Right ventricle myocardium inferior (tissue), 1 donor: ENCODE measurements at regions of chr2 and their contacts with region 1.

Region 1: DNA sequence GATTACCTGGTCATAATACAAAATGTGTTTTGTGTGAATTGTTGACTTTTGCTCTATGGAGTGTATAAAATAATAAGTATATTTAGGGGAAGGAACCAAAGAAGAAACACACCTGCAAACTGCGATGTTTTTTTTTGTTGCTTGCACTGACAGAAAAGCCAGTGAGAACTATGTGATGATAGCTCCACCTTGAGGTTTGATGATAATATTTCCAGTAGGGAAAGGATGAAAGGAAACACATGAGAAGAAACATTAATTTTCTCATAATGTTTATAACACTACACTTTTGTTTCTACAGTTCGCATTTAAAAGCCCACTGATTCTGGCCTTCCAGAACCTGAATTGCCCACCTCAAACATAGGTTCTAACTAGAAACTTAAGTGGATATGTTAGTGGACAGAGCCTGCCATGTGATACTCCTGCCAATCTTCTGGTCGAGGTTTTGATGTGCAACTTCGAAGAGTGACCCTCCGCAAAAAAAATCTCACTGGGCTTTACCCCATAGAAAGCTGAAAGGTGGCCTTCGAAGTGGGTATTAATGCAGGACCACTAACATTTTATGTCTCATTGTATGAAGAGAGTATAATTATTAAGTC is 476.4 kb upstream of the SPHKAP start:
- DNase-seq: no peak
- ATAC-seq: no peak

Region 2: DNA sequence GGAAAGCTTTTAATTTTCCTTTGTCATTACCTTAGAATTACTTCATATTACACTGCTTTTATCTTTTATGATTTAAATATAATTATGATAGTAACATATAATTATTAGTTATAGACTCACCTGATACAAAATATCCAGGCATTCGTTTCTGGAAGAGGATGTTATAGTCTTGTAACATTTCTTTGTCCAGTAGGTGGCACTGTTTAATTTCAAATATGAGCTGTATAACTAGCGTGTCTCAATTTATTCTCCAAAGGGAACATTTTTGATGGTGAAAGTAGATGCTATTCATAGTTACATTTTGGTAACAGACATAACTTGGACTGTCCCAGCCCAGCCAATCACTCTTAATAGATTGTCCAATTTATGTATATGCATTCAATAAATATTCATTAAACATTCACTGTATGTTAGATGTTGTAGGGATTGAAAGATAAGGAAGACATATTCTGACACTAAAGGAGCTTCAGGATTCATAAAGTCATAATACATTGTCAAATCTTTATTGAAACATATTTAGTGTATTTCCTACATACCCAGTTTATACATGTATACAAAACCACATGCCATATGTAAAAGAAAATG is 767.3 kb before region 1 on chr2:
- intact Hi-C with region 1: loop called (anchors 5 kb)
- DNase-seq: no peak
- ATAC-seq: peak; percentile 62

Region 3: DNA sequence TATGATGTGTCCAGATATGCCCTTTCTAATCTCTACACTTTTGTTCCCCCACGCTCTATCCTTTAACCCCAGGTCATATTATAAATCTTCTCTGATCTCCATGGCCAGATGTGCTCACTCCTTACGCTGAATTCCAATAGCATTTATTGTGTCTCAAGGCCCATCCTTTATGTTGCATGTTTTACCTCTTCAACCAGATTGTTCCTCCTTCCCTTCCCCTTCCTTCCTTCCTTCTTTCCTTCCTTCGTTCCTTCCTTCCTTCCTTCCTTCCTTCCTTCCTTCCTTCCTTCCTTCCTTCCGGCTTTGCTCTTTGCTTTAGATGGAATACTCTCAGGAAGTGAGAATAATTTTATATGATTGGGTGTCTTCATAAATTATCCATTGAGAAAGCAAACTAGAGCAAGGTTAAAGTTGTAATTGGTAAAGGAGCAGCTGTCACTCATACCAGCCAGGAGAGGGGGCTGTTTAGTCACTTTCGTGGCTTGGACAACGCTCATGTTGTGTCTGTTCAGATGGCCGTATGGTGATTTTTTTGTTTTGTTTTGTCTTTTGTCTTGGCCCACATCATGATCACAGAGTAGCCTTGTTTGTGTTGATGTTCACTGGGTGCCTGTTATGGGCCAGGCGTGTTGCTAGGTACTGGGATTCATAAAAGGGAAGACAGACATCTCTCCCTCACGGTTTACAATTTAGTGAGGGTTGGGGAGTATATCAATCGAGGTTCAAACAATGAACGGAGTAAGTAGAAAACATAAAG is 718.5 kb before region 1 on chr2:
- intact Hi-C with region 1: loop called (anchors 2 kb)
- DNase-seq: no peak
- ATAC-seq: peak; percentile 67

Region 4: DNA sequence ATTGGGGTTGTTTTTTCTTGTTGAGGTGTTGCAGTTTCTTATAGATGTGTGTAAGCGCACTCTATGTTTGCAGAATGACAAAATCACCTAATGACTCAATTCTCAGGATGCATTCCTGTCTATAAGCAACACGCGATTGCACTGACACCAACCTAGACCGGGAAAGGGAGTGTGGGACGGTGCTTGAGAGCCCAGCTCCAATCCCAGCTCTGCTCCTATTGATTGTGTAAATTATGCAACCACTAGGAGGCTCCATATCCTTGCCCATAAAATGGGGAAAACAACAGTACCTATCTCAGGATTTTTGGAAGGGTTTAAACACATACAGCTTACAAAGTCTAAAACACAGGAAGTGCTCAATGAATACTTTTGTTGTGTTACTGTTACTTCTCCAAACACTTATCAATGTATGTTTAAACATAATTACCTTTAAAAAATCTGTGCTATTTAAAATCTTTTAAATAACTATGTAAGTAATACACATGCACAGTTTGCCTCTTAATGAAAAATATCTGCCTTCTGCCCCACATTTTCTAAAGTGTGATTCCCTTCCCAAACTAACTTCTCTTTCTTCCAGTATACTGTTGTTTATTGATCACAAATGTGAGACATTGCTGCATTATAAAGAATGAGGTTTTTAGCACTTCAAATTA is 608.9 kb before region 1 on chr2:
- intact Hi-C with region 1: loop called (anchors 5 kb)
- DNase-seq: no peak
- ATAC-seq: peak; percentile 82

Region 5: GRCh38 chr2:228318218-228318617 is 339.7 kb before region 1 on chr2:
- intact Hi-C with region 1: loop called (anchors 5 kb)
- DNase-seq: no peak
- ATAC-seq: peak; percentile 69

Region 6: DNA sequence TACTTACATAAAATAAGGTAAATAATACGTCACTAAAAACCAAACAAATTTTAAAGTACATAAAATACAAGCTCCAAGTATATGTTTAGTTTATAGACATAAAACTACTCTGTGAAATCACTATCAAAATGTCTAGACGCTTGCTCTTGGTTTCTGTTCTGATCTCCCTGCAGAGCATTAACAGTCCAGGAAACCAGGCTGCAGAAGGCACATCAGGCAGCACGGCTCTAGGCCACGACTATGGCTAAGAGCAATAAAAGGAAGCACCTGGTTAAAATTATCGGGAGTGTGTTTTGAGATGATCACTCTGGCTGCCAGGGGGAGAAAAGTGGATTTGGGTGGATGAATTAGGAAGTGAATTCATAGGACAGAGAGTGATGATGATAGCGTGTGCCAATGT is 280.4 kb before region 1 on chr2:
- intact Hi-C with region 1: loop called (anchors 2 kb)
- DNase-seq: no peak
- ATAC-seq: no peak